ENCODE measurements at regions of chr3 and their contacts with region 1.

Region 1: GRCh38 chr3:180311242-180311641 is 274.5 kb upstream of the PEX5L start:
- DNase-seq: no peak
- H3K4me3 ChIP-seq: no peak overlapping the region
- H3K27ac ChIP-seq: no peak overlapping the region
- H3K4me1 ChIP-seq: no peaks in the 10 kb centered on the region
- H3K27me3 ChIP-seq: no peaks in the 10 kb centered on the region
- CTCF ChIP-seq: no peak

Region 2: DNA sequence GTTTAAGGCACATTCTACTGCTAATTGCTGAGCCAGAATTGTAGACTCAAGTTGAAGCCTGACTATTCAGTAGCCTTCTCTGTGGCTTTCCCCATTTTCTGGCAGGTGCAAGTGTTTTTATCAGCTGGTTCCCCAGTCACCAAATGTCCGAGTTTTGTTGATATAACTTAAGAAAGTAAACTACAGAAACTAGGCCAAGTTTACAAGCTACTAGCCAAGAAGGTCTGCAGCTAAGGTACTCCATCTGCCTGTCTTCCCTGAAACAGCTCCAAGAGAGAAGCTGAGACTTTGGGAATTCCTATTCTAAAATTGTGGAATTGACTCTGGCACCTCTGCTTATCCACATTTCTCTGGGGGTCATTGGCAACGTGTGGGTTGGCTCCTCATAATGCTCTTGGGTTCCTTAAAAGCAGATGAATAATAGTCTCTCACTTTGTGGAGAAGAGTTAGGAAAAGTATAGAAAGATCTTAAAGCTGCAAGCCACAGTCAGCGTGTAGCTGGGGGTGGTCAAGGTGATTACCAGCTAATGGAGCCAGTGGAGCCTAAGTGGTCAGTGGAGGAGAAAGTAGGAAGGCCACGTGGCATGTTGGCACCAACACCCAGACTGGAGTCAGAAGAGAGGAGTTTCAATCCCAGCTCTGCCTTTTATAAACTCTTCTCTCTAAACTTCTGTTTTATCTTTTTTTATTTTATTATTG is 403.3 kb before region 1 on chr3:
- intact Hi-C with region 1: no loop called
- DNase-seq: no peak
- H3K4me3 ChIP-seq: no peak overlapping the region
- H3K27ac ChIP-seq: no peak overlapping the region
- H3K4me1 ChIP-seq: no peaks in the 10 kb centered on the region
- H3K27me3 ChIP-seq: peaks cover 0 to 2% of the 10 kb centered on the region in 2 donors
- CTCF ChIP-seq: no peak

Region 3: DNA sequence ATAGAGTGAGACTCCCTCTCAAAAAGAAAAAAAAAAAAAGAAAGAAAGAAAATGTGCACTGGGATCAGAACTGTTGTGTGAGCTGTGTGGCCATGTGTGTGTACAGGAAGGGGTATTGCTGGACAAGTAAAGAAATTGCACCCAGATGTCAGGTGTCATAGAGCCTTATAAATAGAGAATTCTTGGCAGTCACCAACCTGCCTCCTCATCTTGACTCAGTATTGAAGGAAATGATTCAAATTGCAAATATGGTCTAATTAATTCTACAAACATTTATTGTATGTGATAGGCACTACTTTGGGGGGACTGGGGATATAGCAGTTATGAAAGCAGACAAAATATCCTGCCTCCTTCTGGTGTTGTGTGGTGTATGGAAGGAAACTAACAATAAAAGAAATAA is 46.9 kb after region 1 on chr3:
- intact Hi-C with region 1: no loop called
- DNase-seq: no peak
- H3K4me3 ChIP-seq: no peak overlapping the region
- H3K27ac ChIP-seq: no peak overlapping the region
- H3K4me1 ChIP-seq: no peaks in the 10 kb centered on the region
- H3K27me3 ChIP-seq: no peaks in the 10 kb centered on the region
- CTCF ChIP-seq: no peak

Region 4: DNA sequence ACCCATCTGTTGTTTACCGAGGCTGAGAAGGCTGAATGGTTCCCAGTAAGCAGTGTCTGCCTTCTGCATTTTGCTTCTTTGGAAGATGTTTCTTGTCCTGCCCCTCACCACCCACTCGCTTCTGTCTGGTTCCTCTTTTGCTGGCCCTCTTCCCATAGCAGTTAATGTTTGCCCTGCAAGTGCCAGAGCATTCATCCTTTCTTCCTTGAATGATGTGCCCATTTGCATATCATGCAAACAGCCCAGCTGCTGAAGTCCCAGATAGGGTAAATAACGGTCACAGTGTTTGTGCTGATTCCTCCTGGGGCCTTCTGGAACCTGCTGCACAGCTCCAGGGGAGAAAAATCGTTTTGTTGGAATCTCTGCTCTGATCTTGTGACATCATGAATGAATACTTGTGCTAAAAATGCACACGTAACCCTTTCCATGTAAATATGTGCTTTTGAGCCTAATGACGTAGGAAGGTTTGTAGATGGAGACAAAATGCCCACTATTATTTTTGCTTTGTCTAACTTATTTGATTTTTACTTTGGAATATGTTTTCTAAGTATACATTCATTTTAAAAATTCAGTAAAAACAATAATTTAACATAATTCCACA is 1781.5 kb after region 1 on chr3:
- intact Hi-C with region 1: loop called (anchors 5 kb)
- DNase-seq: no peak
- H3K4me3 ChIP-seq: no peak overlapping the region
- H3K27ac ChIP-seq: no peak overlapping the region
- H3K4me1 ChIP-seq: no peaks in the 10 kb centered on the region
- H3K27me3 ChIP-seq: no peaks in the 10 kb centered on the region
- CTCF ChIP-seq: no peak

Measured in tibial artery (tissue), 4 donors.